Heart right ventricle (tissue), 16 donors: ENCODE measurements at regions of chr20 and their contacts with region 1.

Region 1: DNA sequence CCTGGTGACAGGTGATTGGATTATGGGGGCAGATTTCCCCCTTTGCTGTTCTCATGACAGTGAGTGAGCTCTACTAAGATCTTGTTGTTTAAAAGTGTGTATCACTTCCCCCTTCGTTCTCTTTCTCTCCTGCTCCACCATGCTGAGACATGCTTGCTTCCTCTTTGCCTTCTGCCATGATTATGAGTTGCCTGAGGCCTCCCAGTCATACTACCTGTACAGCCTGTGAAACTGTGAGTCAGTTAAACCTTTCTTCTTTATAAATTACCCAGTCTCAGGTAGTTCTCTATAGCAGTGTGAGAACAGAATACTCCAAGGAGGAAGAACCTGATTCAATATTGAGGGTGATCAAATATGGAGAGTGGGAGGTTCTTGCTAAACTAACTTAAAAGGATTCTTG is 724.9 kb downstream of the DOK5 start:
- DNase-seq: no peak
- ATAC-seq: no peak
- H3K4me3 ChIP-seq: no peak overlapping the region
- H3K27ac ChIP-seq: no peak overlapping the region
- H3K4me1 ChIP-seq: no peaks in the 10 kb centered on the region
- H3K27me3 ChIP-seq: no peaks in the 10 kb centered on the region
- CTCF ChIP-seq: no peak

Region 2: GRCh38 chr20:55211481-55211880 is 11.2 kb after region 1 on chr20:
- intact Hi-C with region 1: loop called in 1 of 10 experiments (anchors 1 kb)
- DNase-seq: no peak
- ATAC-seq: no peak
- H3K4me3 ChIP-seq: no peak overlapping the region
- H3K27ac ChIP-seq: no peak overlapping the region
- H3K4me1 ChIP-seq: no peaks in the 10 kb centered on the region
- H3K27me3 ChIP-seq: no peaks in the 10 kb centered on the region
- CTCF ChIP-seq: no peak